ENCODE measurements at regions of chr11 and their contacts with region 1.

Region 1: GRCh38 chr11:112588252-112588694 is 327.6 kb upstream of the PLET1 start:
- DNase-seq: peak; percentile 55 to 72 (median 66)
- H3K4me3 ChIP-seq: no peak overlapping the region
- H3K27ac ChIP-seq: no peak overlapping the region
- H3K4me1 ChIP-seq: peaks cover 3% of the 10 kb centered on the region
- H3K27me3 ChIP-seq: no peaks in the 10 kb centered on the region
- CTCF ChIP-seq: peak; percentile 44 to 76 (median 73)
- EP300 ChIP-seq: no peak
- POLR2A ChIP-seq: no peak

Region 2: GRCh38 chr11:112280268-112281126 is 307.8 kb before region 1 on chr11:
- intact Hi-C with region 1: loop called in 1 of 4 experiments (anchors 10 kb)
- DNase-seq: peak; percentile 54 to 76 (median 57)
- H3K4me3 ChIP-seq: peak overlapping the region; percentile 40
- H3K27ac ChIP-seq: no peak overlapping the region
- H3K4me1 ChIP-seq: no peaks in the 10 kb centered on the region
- H3K27me3 ChIP-seq: no peaks in the 10 kb centered on the region
- CTCF ChIP-seq: peak; percentile 58 to 75 (median 64)
- EP300 ChIP-seq: no peak
- POLR2A ChIP-seq: no peak

Region 3: GRCh38 chr11:113119966-113120736 is 531.9 kb after region 1 on chr11:
- intact Hi-C with region 1: loop called in 1 of 4 experiments (anchors 10 kb)
- DNase-seq: no peak
- H3K4me3 ChIP-seq: no peak overlapping the region
- H3K27ac ChIP-seq: no peak overlapping the region
- H3K4me1 ChIP-seq: peaks cover 3% of the 10 kb centered on the region
- H3K27me3 ChIP-seq: no peaks in the 10 kb centered on the region
- CTCF ChIP-seq: no peak
- EP300 ChIP-seq: no peak
- POLR2A ChIP-seq: no peak

Region 4: GRCh38 chr11:113274713-113275582 is 686.7 kb after region 1 on chr11:
- intact Hi-C with region 1: loop called in 1 of 4 experiments (anchors 10 kb)
- DNase-seq: no peak
- H3K4me3 ChIP-seq: no peak overlapping the region
- H3K27ac ChIP-seq: no peak overlapping the region
- H3K4me1 ChIP-seq: no peaks in the 10 kb centered on the region
- H3K27me3 ChIP-seq: no peaks in the 10 kb centered on the region
- CTCF ChIP-seq: no peak
- EP300 ChIP-seq: no peak
- POLR2A ChIP-seq: no peak

Region 5: GRCh38 chr11:113289431-113290187 is 701.3 kb after region 1 on chr11:
- intact Hi-C with region 1: loop called in 3 of 4 experiments (anchors 5 to 10 kb)
- DNase-seq: peak; percentile 42 to 82 (median 64)
- H3K4me3 ChIP-seq: no peak overlapping the region
- H3K27ac ChIP-seq: no peak overlapping the region
- H3K4me1 ChIP-seq: no peaks in the 10 kb centered on the region
- H3K27me3 ChIP-seq: no peaks in the 10 kb centered on the region
- CTCF ChIP-seq: peak; percentile 78 to 87 (median 82)
- EP300 ChIP-seq: no peak
- POLR2A ChIP-seq: no peak